Esophagus muscularis mucosa (tissue), 4 donors: ENCODE measurements at regions of chr5 and their contacts with region 1.

Region 1: DNA sequence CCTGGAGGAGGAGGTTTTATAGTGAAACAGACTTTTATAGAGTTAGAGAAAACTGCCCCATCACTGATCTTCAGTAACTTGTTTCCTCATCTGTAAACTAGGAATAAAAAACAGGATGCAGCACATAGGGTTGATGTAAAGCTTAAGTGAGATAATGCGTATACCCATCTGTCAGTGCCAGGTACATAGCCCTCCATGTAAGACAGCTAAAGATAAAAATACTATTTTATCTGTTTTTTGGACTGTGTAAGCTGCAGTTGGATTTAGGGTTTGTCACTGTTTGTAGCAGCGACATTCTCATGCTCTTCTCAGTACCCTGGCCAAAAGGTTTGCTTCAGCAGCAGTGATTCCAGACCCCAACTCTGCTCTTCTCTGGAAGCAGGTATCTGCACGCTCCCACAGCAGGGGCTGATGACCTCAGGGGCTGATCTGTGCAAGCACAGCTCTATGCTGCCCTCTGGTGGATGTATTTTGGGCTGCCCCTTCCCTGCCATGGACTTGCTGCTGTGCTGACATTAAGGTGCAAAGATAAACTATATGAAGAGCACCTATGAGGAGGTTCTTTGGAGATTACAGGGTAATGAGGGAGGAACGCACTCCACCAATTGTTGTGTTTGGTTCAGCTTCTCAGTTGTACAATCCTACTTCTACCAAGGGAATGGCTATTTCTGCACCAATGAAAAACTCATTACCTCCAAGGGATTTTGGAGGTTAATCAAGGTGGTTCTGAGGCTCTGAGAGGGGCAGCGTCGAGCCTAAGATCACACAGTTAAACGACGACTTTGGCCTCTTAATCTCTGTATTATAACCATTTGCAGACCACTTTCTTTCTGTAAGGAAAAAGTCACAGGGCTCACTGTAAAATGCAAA is 13.1 kb downstream of the HMHB1 start:
- DNase-seq: peak; percentile 94
- H3K4me3 ChIP-seq: no peak overlapping the region
- H3K27ac ChIP-seq: no peak overlapping the region
- H3K4me1 ChIP-seq: peaks cover 5 to 12% (median 7%) of the 10 kb centered on the region in 4 donors
- H3K27me3 ChIP-seq: no peaks in the 10 kb centered on the region
- CTCF ChIP-seq: peak in 2 of 3 experiments; percentile 90 to 96
- EP300 ChIP-seq: no peak
- POLR2A ChIP-seq: no peak

Region 2: GRCh38 chr5:143002459-143003328 is 822.4 kb before region 1 on chr5:
- intact Hi-C with region 1: loop called (anchors 10 kb)
- DNase-seq: no peak
- H3K4me3 ChIP-seq: no peak overlapping the region
- H3K27ac ChIP-seq: peak overlapping the region; percentile 20 to 65 (median 61)
- H3K4me1 ChIP-seq: peaks cover 49 to 59% (median 54%) of the 10 kb centered on the region in 4 donors
- H3K27me3 ChIP-seq: no peaks in the 10 kb centered on the region
- CTCF ChIP-seq: peak; percentile 49 to 68 (median 55)
- EP300 ChIP-seq: no peak
- POLR2A ChIP-seq: no peak

Region 3: GRCh38 chr5:143923634-143924255 is 98.7 kb after region 1 on chr5:
- intact Hi-C with region 1: no loop called
- DNase-seq: no peak
- H3K4me3 ChIP-seq: no peak overlapping the region
- H3K27ac ChIP-seq: no peak overlapping the region
- H3K4me1 ChIP-seq: peaks cover 0 to 5% (median 4%) of the 10 kb centered on the region in 4 donors
- H3K27me3 ChIP-seq: no peaks in the 10 kb centered on the region
- CTCF ChIP-seq: no peak
- EP300 ChIP-seq: no peak
- POLR2A ChIP-seq: no peak